Activated CD4-positive, alpha-beta memory T cell treated with anti-CD3 and anti-CD28 coated beads, Interleukin-2, amount 10 ng/mL, durations not matched to agents 7 days and 5 days (primary cell): ENCODE measurements at regions of chr6 and their contacts with region 1.

Region 1: DNA sequence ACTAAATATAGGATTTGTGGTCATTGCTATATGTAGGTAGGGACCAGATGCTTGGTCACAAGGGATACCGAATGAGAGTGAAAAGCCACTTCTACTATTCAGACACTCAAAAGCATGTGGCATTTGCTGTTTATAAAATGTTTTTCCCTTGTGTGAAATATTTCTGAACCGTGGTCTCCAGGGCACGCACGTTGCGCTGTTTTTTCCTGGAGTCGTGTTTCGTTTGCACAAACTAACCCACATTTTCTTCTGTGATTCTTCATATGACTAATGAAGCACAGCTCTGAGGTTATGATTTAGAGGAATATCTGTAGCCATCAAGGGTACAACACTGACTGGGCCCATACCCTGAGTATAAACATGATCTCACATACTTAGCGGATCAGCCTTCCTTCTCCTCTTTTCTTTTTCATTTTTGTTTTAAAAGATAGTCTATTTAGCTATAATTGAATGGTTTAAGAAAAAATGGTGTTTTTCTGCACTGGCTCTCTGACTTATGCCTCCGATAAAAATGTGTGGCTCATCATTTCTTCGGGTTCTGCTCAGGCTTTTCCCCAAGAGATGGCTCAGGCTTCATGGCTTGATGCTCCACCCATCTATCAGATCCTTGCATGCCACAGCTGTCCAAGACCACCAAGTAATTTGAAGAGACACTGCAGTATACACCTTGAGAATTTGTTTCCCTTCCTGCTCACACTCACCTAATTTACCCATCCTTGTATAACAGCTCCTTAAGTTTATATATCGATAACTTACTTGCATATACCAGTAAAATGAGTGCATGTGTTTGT is 59.9 kb upstream of the HBS1L start:
- DNase-seq: peak; percentile 78
- H3K4me3 Mint-ChIP-seq: peak overlapping the region; percentile 46
- H3K27ac Mint-ChIP-seq: peak overlapping the region; percentile 95
- H3K4me1 Mint-ChIP-seq: peaks cover 75% of the 10 kb centered on the region
- H3K27me3 Mint-ChIP-seq: no peaks in the 10 kb centered on the region

Region 2: DNA sequence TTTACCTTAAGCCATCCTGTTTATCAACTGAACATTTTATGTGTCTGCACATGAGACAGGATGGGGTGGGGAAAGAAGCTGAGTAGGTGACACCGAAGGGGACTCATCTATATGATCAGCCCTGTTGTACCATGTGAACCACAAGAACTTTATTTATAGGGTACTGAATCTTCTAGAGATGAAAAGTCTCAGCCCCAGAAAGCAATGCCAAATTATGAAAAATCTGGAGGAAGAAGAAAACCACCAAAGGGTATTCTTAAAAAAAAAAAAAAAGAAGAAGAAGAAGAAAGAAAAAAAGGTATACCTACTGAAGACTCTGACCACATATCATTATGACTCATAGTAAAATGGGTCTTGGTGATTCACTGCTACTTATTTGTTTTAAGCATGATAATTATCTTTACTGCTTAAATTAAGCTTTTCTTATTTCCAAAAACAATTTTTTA is 20.1 kb before region 1 on chr6:
- CTCF ChIA-PET with region 1: interaction called, 5 read pairs
- POLR2A ChIA-PET with region 1: interaction called, 57 read pairs
- DNase-seq: peak; percentile 37
- H3K4me3 Mint-ChIP-seq: peak overlapping the region; percentile 38
- H3K27ac Mint-ChIP-seq: peak overlapping the region; percentile 92
- H3K4me1 Mint-ChIP-seq: peaks cover 47% of the 10 kb centered on the region
- H3K27me3 Mint-ChIP-seq: no peaks in the 10 kb centered on the region

Region 3: GRCh38 chr6:135128268-135128914 is 13.8 kb after region 1 on chr6:
- CTCF ChIA-PET with region 1: interaction called, 7 read pairs
- POLR2A ChIA-PET with region 1: interaction called, 57 read pairs
- DNase-seq: peak; percentile 74
- H3K4me3 Mint-ChIP-seq: peak overlapping the region; percentile 47
- H3K27ac Mint-ChIP-seq: peak overlapping the region; percentile 96
- H3K4me1 Mint-ChIP-seq: peaks cover 41% of the 10 kb centered on the region
- H3K27me3 Mint-ChIP-seq: no peaks in the 10 kb centered on the region

Region 4: DNA sequence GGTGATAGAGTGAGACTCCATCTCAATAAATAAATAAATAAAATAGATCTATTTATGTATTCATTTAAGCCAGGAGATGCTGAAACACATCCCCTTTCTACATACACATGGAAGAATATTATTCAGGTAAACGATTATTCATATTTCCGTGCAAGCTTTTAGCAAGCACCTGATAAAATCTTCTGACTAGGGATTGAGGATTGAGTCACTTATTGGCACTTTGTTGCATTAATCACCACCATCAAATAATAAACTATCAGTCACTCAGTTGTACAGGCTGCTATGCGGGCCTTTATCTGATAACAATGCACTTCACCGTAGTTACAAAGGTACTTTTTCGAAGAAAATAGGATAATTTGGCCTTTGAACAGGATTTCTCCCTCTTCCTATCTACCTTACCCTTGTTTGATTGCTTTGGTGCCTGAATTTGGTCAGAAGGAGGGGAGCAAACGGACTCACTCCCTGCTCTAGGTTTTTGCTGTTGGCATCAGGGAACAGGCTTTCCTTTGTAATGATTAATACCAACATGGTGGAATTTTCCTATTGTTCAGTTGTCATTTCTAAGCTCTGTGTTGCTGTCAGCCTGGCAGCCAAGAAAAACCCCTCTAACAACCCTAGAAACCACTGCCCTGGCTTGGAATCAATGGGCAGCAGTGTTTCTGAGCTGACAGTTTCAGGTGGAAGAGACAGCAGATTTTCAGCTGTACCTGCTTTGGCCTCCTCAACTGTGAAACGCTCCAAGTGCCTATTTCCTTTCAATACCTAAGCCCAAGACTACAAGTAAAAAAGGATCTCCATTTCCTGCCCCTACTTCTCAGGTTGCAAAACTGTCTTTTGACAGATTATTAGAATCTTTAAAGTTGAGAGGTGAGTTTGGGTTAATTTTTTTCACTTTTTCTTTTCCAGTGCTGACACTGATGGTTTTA is 129.6 kb after region 1 on chr6:
- CTCF ChIA-PET with region 1: no interaction called
- POLR2A ChIA-PET with region 1: no interaction called
- DNase-seq: no peak
- H3K4me3 Mint-ChIP-seq: no peak overlapping the region
- H3K27ac Mint-ChIP-seq: no peak overlapping the region
- H3K4me1 Mint-ChIP-seq: no peaks in the 10 kb centered on the region
- H3K27me3 Mint-ChIP-seq: no peaks in the 10 kb centered on the region

Region 5: DNA sequence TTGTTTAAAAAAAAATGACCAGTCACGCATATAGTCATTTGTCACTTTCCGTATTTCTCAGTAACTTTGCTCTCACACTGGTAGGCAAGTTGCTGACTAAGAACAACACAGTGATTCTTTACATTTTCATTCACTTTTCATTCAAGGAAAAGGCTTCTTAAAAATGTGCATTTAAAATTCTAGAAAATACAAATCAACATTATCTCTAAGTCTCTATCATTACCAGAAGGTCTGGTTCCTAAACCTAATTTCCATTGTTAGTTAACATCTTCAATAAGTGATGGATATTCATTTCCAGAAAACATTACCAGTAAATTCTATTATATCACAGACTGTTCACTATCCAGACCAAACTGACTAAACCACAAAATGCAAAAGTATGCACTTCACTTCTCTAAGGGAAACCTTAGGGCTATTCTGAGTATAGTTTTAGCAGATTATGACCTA is 267.7 kb after region 1 on chr6:
- CTCF ChIA-PET with region 1: no interaction called
- POLR2A ChIA-PET with region 1: no interaction called
- DNase-seq: no peak
- H3K4me3 Mint-ChIP-seq: no peak overlapping the region
- H3K27ac Mint-ChIP-seq: no peak overlapping the region
- H3K4me1 Mint-ChIP-seq: peaks cover 12% of the 10 kb centered on the region
- H3K27me3 Mint-ChIP-seq: no peaks in the 10 kb centered on the region